ENCODE measurements at regions of chr10 and their contacts with region 1.

Region 1: DNA sequence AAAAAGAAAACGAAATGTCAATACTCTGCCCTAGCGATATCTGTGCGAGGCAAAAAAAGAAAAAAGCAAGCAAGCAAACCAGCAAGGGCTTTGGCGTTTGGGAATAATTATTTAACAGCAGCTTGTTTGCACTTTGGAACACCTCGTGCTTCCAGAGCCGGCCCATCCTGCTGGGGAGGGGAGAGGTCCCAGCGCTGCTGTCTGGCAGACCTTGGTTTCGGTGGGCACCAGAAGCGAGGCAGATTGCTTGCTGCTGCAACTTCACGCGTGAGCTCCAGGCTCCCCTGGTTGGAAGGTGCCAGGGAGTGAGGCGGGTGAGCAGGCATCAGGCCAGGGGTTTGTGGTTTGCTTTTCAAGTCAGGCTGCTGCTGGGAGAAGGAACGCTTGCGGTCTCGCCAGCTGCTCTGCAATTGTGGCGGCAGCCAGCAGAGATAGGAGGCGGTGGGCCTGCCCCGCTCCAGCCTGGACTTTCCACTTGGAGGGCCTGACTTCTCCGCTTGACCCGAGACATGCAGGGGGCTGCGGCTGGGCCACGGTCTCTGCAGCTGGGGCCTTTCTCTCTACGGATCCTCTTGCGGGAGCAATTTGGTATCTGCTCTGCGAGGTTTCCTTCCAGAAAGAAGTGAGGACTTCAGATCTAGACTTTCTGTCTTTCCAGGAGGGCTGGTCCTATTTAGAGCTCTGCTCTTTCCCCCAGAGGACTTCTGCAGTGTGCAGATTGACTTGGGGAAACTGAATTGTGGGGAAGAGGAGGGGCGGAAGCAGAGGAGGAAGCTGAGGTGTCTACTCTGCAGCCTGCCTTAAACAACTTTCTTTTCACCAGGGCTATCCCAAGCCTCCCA is 131.4 kb downstream of the PRPF18 start:
- DNase-seq: no peak
- ATAC-seq: peak; percentile 52
- H3K4me3 ChIP-seq: peak overlapping the region; percentile 23
- H3K27ac ChIP-seq: peak overlapping the region; percentile 87
- H3K4me1 ChIP-seq: peaks cover 29% of the 10 kb centered on the region
- H3K27me3 ChIP-seq: no peaks in the 10 kb centered on the region
- CTCF ChIP-seq: no peak
- EP300 ChIP-seq: no peak
- POLR2A ChIP-seq: 0 out of 2 replicates have a peak, but pooled peaks have one; percentile 23
- RAD21 ChIP-seq: no peak

Region 2: DNA sequence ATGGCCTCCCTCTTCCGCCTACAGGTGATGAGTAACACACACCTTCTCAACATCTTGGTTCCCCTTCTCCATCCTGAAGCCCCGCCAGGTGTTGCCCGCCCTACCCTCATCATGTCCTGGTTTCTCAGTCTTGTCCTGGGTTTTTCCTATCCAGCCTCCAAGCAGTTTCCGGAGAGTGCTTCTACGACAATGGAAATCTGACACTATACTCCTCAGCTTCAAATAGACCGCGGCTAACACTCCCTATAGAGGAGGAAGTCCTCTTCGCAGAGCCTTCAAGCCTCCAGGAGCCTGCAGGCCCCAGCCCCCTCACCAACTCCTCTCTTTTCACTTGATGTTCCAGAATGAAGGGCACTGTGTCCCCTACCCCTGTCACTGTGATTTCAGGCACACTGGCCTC is 16.0 kb after region 1 on chr10:
- CTCF ChIA-PET with region 1: interaction called, 9 read pairs
- POLR2A ChIA-PET with region 1: interaction called, 7 read pairs
- RAD21 ChIA-PET with region 1: interaction called, 5 read pairs
- SMC1A ChIA-PET with region 1: interaction called, 38 read pairs
- in situ Hi-C with region 1: no loop called
- intact Hi-C with region 1: no loop called
- DNase-seq: no peak
- ATAC-seq: no peak
- H3K4me3 ChIP-seq: no peak overlapping the region
- H3K27ac ChIP-seq: no peak overlapping the region
- H3K4me1 ChIP-seq: no peaks in the 10 kb centered on the region
- H3K27me3 ChIP-seq: no peaks in the 10 kb centered on the region
- CTCF ChIP-seq: no peak
- EP300 ChIP-seq: no peak
- POLR2A ChIP-seq: no peak
- RAD21 ChIP-seq: no peak

Region 3: DNA sequence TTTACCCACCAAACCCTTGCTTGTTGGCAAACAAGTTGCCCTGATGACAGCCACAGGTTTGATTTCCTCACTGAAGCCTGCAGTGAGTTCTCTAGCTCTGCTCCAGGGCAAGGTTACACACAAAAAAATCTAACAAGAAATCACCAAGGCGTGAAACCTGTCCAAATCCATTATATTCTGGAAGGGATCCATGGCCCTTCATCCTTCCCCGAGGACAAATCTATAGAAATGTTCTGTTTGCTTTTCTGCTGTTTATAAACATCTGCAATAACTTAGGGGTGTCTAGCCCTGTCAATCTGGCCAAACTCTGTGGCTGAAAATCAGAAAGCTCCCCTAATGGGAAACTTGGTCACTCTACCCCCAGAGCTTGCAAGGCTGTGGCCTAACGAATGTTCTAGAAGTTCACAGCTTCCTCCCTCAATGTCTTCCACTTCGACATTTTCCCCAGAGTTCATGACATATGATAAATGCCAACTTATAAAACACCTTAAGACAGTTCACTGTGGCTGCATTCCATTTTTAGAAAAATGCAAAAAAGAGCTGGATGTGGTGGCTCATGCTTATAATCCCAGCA is 33.1 kb after region 1 on chr10:
- CTCF ChIA-PET with region 1: interaction called, 3 read pairs
- POLR2A ChIA-PET with region 1: interaction called, 14 read pairs
- RAD21 ChIA-PET with region 1: interaction called, 14 read pairs
- SMC1A ChIA-PET with region 1: interaction called, 26 read pairs
- in situ Hi-C with region 1: no loop called
- intact Hi-C with region 1: loop called (anchors 5 kb)
- DNase-seq: peak; percentile 60
- ATAC-seq: peak; percentile 69
- H3K4me3 ChIP-seq: no peak overlapping the region
- H3K27ac ChIP-seq: peak overlapping the region; percentile 78
- H3K4me1 ChIP-seq: peaks cover 73% of the 10 kb centered on the region
- H3K27me3 ChIP-seq: no peaks in the 10 kb centered on the region
- CTCF ChIP-seq: no peak
- EP300 ChIP-seq: peak in 1 of 2 experiments; percentile 64; a peak in 2 of 4 replicates
- POLR2A ChIP-seq: no peak
- RAD21 ChIP-seq: no peak

Region 4: GRCh38 chr10:13769955-13770354 is 51.8 kb after region 1 on chr10:
- CTCF ChIA-PET with region 1: interaction called, 4 read pairs
- POLR2A ChIA-PET with region 1: interaction called, 10 read pairs
- RAD21 ChIA-PET with region 1: interaction called, 20 read pairs
- SMC1A ChIA-PET with region 1: interaction called, 24 read pairs
- in situ Hi-C with region 1: no loop called
- intact Hi-C with region 1: no loop called
- DNase-seq: no peak
- ATAC-seq: peak; percentile 78
- H3K4me3 ChIP-seq: no peak overlapping the region
- H3K27ac ChIP-seq: no peak overlapping the region
- H3K4me1 ChIP-seq: peaks cover 11% of the 10 kb centered on the region
- H3K27me3 ChIP-seq: no peaks in the 10 kb centered on the region
- CTCF ChIP-seq: no peak
- EP300 ChIP-seq: peak; percentile 14 to 25; a peak in 2 of 4 replicates
- POLR2A ChIP-seq: no peak
- RAD21 ChIP-seq: no peak